Common myeloid progenitor, CD34-positive (primary cell): ENCODE measurements at regions of chr10 and their contacts with region 1.

Region 1: GRCh38 chr10:69004821-69005220 is 16.2 kb downstream of the KIFBP start:
- DNase-seq: peak; percentile 60 to 76 (median 76)
- H3K4me3 ChIP-seq: no peak overlapping the region
- H3K27ac ChIP-seq: peak overlapping the region in 1 of 2 experiments; percentile 7
- H3K4me1 ChIP-seq: peaks cover 0 to 11% (median 0%) of the 10 kb centered on the region in 4 experiments
- H3K27me3 ChIP-seq: no peaks in the 10 kb centered on the region

Region 2: GRCh38 chr10:69025370-69025896 is 20.6 kb after region 1 on chr10:
- CTCF ChIA-PET with region 1: no interaction called
- POLR2A ChIA-PET with region 1: no interaction called
- DNase-seq: no peak
- H3K4me3 ChIP-seq: no peak overlapping the region
- H3K27ac ChIP-seq: no peak overlapping the region
- H3K4me1 ChIP-seq: peaks cover 2 to 6% (median 4%) of the 10 kb centered on the region in 4 experiments
- H3K27me3 ChIP-seq: no peaks in the 10 kb centered on the region

Region 3: GRCh38 chr10:69092959-69093850 is 88.4 kb after region 1 on chr10:
- CTCF ChIA-PET with region 1: interaction called, 96 read pairs
- POLR2A ChIA-PET with region 1: interaction called, 6 read pairs
- DNase-seq: peak; percentile 91 to 96 (median 94)
- H3K4me3 ChIP-seq: peak overlapping the region in 1 of 7 experiments; percentile 47
- H3K27ac ChIP-seq: peak overlapping the region in 1 of 2 experiments; percentile 35
- H3K4me1 ChIP-seq: peaks cover 21 to 46% (median 33%) of the 10 kb centered on the region in 4 experiments
- H3K27me3 ChIP-seq: no peaks in the 10 kb centered on the region

Region 4: GRCh38 chr10:69107699-69108098 is 102.9 kb after region 1 on chr10:
- CTCF ChIA-PET with region 1: interaction called, 17 read pairs
- POLR2A ChIA-PET with region 1: interaction called, 3 read pairs
- DNase-seq: no peak
- H3K4me3 ChIP-seq: no peak overlapping the region
- H3K27ac ChIP-seq: no peak overlapping the region
- H3K4me1 ChIP-seq: no peaks in the 10 kb centered on the region
- H3K27me3 ChIP-seq: no peaks in the 10 kb centered on the region

Region 5: DNA sequence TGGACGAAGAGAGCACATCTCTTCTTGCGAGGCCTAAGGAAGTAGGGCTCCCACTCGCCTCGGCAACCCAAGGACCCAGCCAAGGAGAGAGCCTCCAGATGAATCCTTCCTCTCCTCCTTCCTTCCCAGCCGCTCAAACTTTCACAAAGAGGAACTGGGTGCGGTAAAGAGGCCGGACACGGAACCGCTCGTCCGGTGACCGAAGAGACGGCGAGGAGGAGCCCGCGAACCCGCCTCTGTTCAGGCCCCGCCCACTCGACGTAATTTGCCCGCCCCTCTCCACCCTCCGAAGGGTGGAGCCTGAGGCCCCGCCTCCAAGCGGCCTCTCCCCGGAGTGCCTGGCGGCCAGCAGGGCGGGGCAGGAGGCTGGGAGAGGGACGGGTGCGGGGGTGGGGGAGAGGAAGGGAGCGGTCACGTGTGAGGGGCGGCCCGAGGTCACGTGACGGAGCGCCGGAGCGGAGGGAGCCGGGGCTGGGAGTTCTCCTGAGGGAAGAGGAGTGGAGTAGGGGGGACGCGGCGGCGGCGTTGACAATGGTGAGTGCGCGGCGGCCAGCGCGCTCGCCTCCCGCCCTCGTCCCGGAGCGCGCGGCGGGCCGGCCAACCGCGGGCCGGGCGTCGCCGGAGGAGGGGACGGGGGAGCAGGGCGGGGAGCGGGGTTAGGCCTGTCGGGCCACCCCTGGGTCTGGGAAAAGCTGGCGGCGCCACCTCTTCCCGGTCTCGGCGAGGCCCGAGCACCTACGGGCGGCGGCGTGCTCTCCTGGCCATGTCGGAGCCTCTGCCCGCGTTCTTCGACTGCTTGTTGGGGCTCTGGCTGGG is 119.1 kb after region 1 on chr10 and contains the start of gene VPS26A:
- CTCF ChIA-PET with region 1: interaction called, 12 read pairs
- POLR2A ChIA-PET with region 1: no interaction called
- DNase-seq: peak; percentile 97 to 99 (median 98)
- H3K4me3 ChIP-seq: peak within 1 kb of the TSS; percentile 71 to 96 (median 89)
- H3K27ac ChIP-seq: peak within 1 kb of the TSS; percentile 89 to 97
- H3K4me1 ChIP-seq: peaks cover 9 to 26% (median 21%) of the 10 kb centered on the region in 4 experiments
- H3K27me3 ChIP-seq: no peaks in the 10 kb centered on the region